Esophagus muscularis mucosa (tissue), 4 donors: ENCODE measurements at regions of chr10 and their contacts with region 1.

Region 1: DNA sequence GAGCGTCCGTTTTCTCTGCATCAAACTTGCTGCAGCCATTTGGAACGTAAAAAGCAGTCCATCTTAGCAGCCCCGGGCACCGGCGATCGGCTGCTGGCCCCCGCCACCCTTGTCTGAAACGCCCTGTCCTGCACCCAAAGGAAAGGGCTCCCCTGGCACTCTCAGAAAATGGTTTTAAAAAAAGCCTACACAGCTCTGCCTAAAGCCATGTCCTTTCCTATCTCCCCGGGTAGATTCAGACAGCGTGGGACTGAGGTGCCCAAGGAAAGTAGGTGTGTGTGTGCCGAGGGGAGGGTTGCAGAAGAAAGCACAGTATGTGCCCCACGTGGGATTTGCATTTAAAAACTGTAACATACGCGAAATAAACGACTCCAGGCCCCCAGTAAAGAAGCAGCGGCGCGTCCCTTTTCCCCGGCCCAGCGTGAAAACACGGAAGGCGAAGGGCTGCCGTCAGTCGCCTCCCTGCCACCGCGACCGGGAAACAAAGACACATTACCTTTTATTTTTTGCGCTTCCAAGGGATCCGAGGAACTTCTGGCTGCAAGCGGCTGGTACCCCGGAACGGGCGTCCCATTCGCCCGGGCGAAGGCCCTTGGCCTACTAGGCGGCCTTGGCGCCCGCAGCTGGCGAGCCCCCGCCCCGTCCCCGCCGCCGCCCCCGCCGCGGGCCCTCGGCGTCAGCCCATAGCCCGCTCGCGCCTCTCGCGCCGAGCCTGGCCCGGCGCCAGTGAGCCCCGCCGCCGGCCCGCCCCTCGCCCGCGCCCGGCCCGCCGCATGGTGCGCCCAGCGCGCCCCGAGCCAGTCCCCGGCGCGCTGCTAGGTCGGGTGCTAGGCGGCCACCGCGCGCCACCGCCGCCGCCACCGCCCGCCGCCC is 304.6 kb downstream of the PRPF18 start:
- DNase-seq: no peak
- H3K4me3 ChIP-seq: peak overlapping the region; percentile 57 to 66 (median 64)
- H3K27ac ChIP-seq: peak overlapping the region; percentile 61 to 77 (median 70)
- H3K4me1 ChIP-seq: peaks cover 23 to 47% (median 39%) of the 10 kb centered on the region in 4 donors
- H3K27me3 ChIP-seq: no peaks in the 10 kb centered on the region
- CTCF ChIP-seq: no peak
- EP300 ChIP-seq: no peak
- POLR2A ChIP-seq: no peak

Region 2: DNA sequence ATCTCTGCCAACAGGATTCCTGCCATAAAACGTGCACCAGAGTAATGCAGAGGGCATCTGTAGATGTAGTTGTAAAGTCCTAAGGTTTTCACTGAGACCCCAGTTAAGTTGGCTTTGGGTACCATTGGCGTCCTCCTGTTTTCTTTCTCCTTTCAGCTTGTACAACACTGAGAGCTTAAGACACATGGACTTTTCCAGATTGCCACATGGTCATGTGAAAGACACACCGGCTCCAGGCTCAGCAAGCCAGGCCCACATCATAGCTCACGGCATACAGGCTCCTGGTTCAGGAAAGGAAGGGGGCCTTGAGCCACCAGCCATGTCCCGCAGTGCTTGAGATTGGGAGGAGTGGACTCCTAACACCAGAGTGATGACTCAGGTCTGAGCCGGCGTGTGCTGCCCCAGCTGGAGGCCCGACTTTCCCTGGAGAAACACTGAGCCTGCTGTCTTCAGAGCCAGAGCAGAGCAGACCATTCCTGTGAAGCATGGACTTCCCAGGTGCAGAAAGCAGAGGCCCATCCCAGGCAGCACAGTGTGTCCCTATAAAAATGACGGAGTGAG is 51.9 kb before region 1 on chr10:
- intact Hi-C with region 1: loop called (anchors 5 kb)
- DNase-seq: no peak
- H3K4me3 ChIP-seq: no peak overlapping the region
- H3K27ac ChIP-seq: peak overlapping the region in 3 of 4 donors; percentile 11 to 40 (median 33)
- H3K4me1 ChIP-seq: peaks cover 46 to 64% (median 63%) of the 10 kb centered on the region in 4 donors
- H3K27me3 ChIP-seq: peaks cover 0 to 3% (median 0%) of the 10 kb centered on the region in 4 donors
- CTCF ChIP-seq: no peak
- EP300 ChIP-seq: no peak
- POLR2A ChIP-seq: no peak